Naive thymus-derived CD4-positive, alpha-beta T cell (primary cell): ENCODE measurements at regions of chr4 and their contacts with region 1.

Region 1: DNA sequence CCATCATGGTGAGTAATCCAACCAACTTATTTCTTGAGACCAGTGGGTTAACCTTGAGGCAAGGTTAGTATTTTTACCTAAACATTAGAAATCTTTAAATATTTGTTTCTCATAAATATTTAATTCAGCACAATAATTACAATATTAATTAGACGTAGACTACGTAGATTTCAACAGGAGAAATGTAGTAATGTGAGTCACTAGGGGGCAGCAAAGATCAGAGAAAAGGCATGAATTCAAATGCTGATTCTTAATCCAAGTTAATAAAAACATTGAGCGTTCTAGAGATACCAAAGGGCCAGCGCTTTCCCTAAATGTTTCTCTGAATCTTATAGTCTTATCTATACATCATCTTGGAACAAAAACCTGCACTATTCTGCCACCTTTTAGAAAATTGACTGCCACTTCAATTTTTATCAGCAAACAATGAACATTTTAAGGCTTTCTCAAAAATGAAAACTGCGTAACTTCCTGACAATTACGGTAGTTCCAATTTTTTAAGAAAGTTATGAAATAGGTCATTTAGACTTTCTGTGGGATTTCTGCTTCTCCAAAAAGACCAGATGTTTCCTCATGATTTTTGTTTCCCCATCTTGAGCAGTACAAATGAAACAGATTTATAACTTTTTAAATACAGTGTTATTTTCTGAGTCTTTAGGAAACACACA is 180.7 kb downstream of the GASK1B start:
- DNase-seq: peak in 5 of 9 donors; percentile 18 to 26 (median 20)
- ATAC-seq: peak; percentile 61
- H3K4me3 ChIP-seq: peak overlapping the region; percentile 19
- H3K4me3 Mint-ChIP-seq: peak overlapping the region in 6 of 10 donors; percentile 32 to 57 (median 48)
- H3K27ac ChIP-seq: no peak overlapping the region
- H3K27ac Mint-ChIP-seq: no peak overlapping the region
- H3K4me1 ChIP-seq: no peaks in the 10 kb centered on the region
- H3K4me1 Mint-ChIP-seq: peaks cover 0 to 2% (median 0%) of the 10 kb centered on the region in 7 donors
- H3K27me3 ChIP-seq: peaks cover 0 to 3% of the 10 kb centered on the region in 2 donors
- H3K27me3 Mint-ChIP-seq: peaks cover 0 to 6% (median 3%) of the 10 kb centered on the region in 5 donors

Region 2: GRCh38 chr4:158020176-158020575 is 28.0 kb after region 1 on chr4:
- CTCF ChIA-PET with region 1: no interaction called
- POLR2A ChIA-PET with region 1: no interaction called
- intact Hi-C with region 1: no loop called
- DNase-seq: no peak
- ATAC-seq: no peak
- H3K4me3 ChIP-seq: no peak overlapping the region
- H3K4me3 Mint-ChIP-seq: no peak overlapping the region
- H3K27ac ChIP-seq: no peak overlapping the region
- H3K27ac Mint-ChIP-seq: no peak overlapping the region
- H3K4me1 ChIP-seq: no peaks in the 10 kb centered on the region
- H3K4me1 Mint-ChIP-seq: no peaks in the 10 kb centered on the region
- H3K27me3 ChIP-seq: no peaks in the 10 kb centered on the region
- H3K27me3 Mint-ChIP-seq: peaks cover 0 to 5% (median 0%) of the 10 kb centered on the region in 5 donors

Region 3: GRCh38 chr4:158172261-158173258 is 180.4 kb after region 1 on chr4 and contains the start of gene GASK1B:
- CTCF ChIA-PET with region 1: no interaction called
- POLR2A ChIA-PET with region 1: no interaction called
- intact Hi-C with region 1: loop called in 1 of 2 experiments (anchors 5 kb)
- DNase-seq: no peak
- ATAC-seq: no peak
- H3K4me3 ChIP-seq: no peak within 1 kb of the TSS
- H3K4me3 Mint-ChIP-seq: no peak within 1 kb of the TSS
- H3K27ac ChIP-seq: no peak within 1 kb of the TSS
- H3K27ac Mint-ChIP-seq: no peak within 1 kb of the TSS
- H3K4me1 ChIP-seq: no peaks in the 10 kb centered on the region
- H3K4me1 Mint-ChIP-seq: peaks cover 0 to 11% (median 4%) of the 10 kb centered on the region in 7 donors
- H3K27me3 ChIP-seq: no peaks in the 10 kb centered on the region
- H3K27me3 Mint-ChIP-seq: peaks cover 26 to 48% (median 35%) of the 10 kb centered on the region in 5 donors
- total RNA-seq, gene GASK1B: 1.00 to 28.2 (median 1.8) TPM in 4 of 5 experiments, not detected in the other

Region 4: GRCh38 chr4:158253350-158253980 is 261.3 kb after region 1 on chr4:
- CTCF ChIA-PET with region 1: no interaction called
- POLR2A ChIA-PET with region 1: no interaction called
- intact Hi-C with region 1: loop called (anchors 5 kb)
- DNase-seq: peak in 7 of 9 donors; percentile 2 to 51 (median 26)
- ATAC-seq: peak; percentile 73
- H3K4me3 ChIP-seq: no peak overlapping the region
- H3K4me3 Mint-ChIP-seq: peak overlapping the region in 1 of 10 donors; percentile 19
- H3K27ac ChIP-seq: no peak overlapping the region
- H3K27ac Mint-ChIP-seq: no peak overlapping the region
- H3K4me1 ChIP-seq: no peaks in the 10 kb centered on the region
- H3K4me1 Mint-ChIP-seq: peaks cover 3 to 14% (median 12%) of the 10 kb centered on the region in 7 donors
- H3K27me3 ChIP-seq: peaks cover 0 to 5% of the 10 kb centered on the region in 2 donors
- H3K27me3 Mint-ChIP-seq: peaks cover 0 to 13% (median 9%) of the 10 kb centered on the region in 5 donors

Region 5: DNA sequence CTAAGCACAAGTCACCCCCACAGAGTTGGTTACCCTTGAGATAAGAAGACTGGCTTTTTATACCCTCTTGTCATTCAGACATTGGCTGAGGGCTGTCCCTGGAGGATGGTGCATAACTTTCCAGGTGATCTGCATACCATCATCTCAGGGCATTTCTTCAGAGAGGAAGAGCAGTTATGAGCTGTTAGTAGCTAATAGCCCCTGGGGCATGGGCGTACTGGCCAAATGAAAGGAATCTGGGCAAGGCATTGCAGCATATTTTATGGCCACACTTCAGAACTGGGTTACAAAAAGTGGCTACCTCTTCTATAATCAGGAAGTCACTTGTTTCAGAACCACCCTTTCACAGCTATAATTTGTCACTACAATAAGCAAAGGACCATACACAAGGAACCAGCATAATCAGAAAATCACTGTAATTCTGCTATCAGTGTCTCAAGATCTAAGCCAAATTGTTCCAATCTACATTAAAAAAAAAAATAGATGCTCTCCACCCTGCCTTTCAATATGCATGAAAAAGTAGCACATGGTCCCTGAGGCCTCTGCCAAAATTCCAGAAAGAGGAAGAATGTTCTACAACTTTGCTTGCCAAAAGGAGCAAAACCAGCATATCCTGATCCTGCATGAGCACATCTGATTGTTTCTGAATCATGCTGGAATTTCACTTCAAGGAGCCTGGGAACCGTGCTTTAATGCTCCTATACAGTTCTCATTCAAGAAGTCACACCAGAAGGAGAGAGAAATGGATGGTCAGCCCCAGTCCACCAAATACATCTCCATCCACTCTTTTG is 310.1 kb after region 1 on chr4:
- CTCF ChIA-PET with region 1: no interaction called
- POLR2A ChIA-PET with region 1: no interaction called
- intact Hi-C with region 1: no loop called
- DNase-seq: no peak
- ATAC-seq: no peak
- H3K4me3 ChIP-seq: no peak overlapping the region
- H3K4me3 Mint-ChIP-seq: no peak overlapping the region
- H3K27ac ChIP-seq: no peak overlapping the region
- H3K27ac Mint-ChIP-seq: no peak overlapping the region
- H3K4me1 ChIP-seq: no peaks in the 10 kb centered on the region
- H3K4me1 Mint-ChIP-seq: no peaks in the 10 kb centered on the region
- H3K27me3 ChIP-seq: no peaks in the 10 kb centered on the region
- H3K27me3 Mint-ChIP-seq: peaks cover 0 to 4% (median 0%) of the 10 kb centered on the region in 5 donors

Region 6: GRCh38 chr4:158624889-158625478 is 632.8 kb after region 1 on chr4:
- CTCF ChIA-PET with region 1: no interaction called
- POLR2A ChIA-PET with region 1: no interaction called
- intact Hi-C with region 1: loop called (anchors 1 kb)
- DNase-seq: peak in 1 of 9 donors; percentile 8
- ATAC-seq: peak; percentile 62
- H3K4me3 ChIP-seq: no peak overlapping the region
- H3K4me3 Mint-ChIP-seq: no peak overlapping the region
- H3K27ac ChIP-seq: no peak overlapping the region
- H3K27ac Mint-ChIP-seq: no peak overlapping the region
- H3K4me1 ChIP-seq: no peaks in the 10 kb centered on the region
- H3K4me1 Mint-ChIP-seq: no peaks in the 10 kb centered on the region
- H3K27me3 ChIP-seq: no peaks in the 10 kb centered on the region
- H3K27me3 Mint-ChIP-seq: peaks cover 18 to 31% (median 28%) of the 10 kb centered on the region in 5 donors

Region 7: GRCh38 chr4:159706704-159707103 is 1714.5 kb after region 1 on chr4:
- CTCF ChIA-PET with region 1: no interaction called
- POLR2A ChIA-PET with region 1: no interaction called
- intact Hi-C with region 1: no loop called
- DNase-seq: no peak
- ATAC-seq: no peak
- H3K4me3 ChIP-seq: no peak overlapping the region
- H3K4me3 Mint-ChIP-seq: no peak overlapping the region
- H3K27ac ChIP-seq: no peak overlapping the region
- H3K27ac Mint-ChIP-seq: no peak overlapping the region
- H3K4me1 ChIP-seq: no peaks in the 10 kb centered on the region
- H3K4me1 Mint-ChIP-seq: no peaks in the 10 kb centered on the region
- H3K27me3 ChIP-seq: no peaks in the 10 kb centered on the region
- H3K27me3 Mint-ChIP-seq: no peaks in the 10 kb centered on the region